Posterior cingulate gyrus (tissue), 11 donors: ENCODE measurements at regions of chr22 and their contacts with region 1.

Region 1: DNA sequence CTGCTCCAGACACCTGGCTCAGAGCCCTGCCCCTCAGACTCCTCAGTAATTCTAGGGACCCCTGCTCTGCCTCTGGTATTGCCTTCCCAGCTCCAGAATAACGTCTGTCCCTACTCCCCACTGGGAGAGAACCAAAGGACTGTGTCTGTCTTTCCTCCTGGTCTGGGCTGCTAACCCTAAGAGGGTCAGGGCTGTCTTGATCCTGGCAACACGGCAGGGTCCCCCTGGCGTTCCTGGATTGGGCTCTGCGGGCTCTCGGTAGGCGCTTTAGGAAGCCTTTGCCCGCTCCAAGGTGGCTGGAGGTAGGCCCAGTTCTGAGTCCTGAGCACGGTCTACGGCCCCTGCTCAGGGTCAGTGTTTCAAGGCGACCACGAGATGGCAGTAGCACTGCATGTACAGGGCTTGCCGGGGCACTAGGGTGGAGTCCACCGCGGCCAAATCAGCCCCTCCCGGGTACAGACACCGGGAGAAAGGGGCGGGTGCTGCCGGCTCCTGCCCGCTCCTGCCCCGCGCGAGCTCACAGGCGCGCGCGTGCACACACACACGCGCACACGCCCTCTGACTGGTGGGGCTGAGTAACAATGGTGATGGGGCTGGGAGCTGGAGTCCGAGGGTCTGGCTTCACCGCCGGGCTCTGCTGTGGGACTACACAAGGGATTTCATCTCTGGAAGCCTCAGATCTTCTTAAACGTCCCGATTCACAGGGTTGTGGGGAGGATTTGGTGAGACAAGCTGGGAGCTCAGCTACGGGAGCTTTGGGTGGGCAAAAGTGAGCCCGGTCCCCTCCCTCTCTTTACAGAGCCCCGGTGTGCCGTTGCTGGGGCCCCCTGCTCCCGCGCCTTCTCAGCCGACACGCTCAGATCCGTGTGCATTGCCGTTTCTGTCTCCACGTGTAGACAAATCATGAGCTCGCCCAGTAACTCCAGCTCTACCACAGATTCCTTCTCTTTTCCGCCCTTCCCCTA is 30.1 kb upstream of the HMOX1 start:
- DNase-seq: peak; percentile 74 to 98 (median 90)

Region 2: GRCh38 chr22:35380547-35381423 is 30.0 kb after region 1 on chr22 and contains the start of gene HMOX1:
- intact Hi-C with region 1: loop called (anchors 2 kb)
- DNase-seq: peak; percentile 80 to 97 (median 85)

Region 3: GRCh38 chr22:35430897-35431322 is 80.1 kb after region 1 on chr22:
- intact Hi-C with region 1: loop called (anchors 5 kb)
- DNase-seq: peak; percentile 72 to 98 (median 88)

Region 4: DNA sequence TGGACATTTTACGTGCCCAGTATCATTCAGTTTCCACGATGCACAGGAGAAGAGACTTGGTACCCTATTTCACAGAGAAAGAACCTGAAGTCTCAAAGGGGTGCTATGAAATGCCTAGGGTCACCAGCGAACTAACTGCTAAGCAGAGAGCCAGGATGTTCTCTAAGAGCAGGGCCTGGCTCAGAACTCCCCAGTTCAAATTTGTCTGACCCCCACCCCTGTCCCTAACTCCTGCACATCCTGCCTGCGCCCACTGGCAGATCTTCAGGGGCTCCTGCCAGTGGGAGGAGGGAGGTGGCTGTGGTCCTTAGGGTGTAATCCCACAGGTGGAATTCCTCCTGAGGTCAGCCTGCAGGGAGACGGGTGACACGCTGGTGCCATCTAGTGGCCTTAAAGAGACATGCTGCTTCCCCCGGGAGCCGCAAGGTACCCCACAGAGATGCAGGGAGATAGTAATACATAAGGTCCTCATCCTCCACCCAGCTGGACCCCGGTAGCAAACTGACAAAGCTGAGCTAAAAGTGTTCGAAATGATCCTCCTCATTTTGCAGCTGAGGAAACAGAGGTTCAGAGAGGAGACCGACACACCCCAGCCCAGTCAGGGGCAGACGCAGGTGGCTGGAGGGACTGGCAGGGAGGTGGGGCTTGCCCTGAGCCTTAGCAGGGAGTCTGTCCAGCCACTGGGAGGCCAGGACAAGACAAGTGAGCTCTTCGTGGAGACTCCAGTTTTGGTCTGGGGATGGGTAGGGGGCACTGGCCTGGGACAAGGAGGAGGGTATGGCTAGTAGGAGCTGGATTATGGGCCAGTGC is 232.2 kb after region 1 on chr22:
- intact Hi-C with region 1: loop called (anchors 2 kb)
- DNase-seq: peak; percentile 45 to 94 (median 65)

Region 5: DNA sequence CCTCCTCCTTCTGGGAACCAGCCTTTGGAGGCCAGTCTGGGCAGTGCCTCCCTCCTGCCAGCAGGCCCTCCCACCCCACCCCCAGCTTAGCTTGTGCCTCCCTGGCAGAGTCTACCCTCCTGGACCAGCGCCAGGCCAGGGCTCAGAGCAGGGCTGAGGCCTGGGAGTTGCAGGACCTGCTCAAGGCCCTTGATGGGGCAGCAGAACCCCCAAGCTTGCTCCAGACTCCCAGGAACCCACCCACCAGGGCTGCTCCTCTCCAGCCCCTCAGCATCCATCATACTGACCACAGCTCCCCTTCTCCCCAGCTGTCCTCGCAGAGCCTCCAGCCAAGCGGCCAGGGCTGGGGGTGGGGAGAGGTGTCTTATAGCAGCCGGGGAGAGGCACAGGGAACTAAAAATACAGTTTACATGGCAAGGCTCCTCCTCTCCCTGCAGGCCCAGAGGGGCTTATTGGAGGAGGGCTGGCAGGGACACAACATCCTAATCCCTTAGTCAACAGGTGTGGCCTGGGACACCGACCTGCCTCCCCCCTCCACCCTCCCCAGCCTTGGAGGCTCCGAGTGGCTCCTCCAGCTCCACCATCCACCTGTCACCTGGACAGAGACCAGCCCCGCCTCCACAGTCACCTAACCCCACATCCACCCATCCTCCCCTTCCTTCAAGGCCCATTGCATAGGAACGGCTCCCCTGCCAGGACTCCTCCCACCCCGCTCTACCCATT is 271.5 kb after region 1 on chr22:
- intact Hi-C with region 1: loop called (anchors 2 kb)
- DNase-seq: peak in 4 of 10 donors; percentile 30 to 76 (median 68)